Right lobe of liver (tissue), 6 donors: ENCODE measurements at regions of chr16 and their contacts with region 1.

Region 1: GRCh38 chr16:70470927-70471341 is 16.5 kb downstream of the FCSK start:
- DNase-seq: peak; percentile 66 to 80 (median 68)
- ATAC-seq: peak; percentile 79 to 91 (median 86)
- H3K4me3 ChIP-seq: no peak overlapping the region
- H3K27ac ChIP-seq: no peak overlapping the region
- H3K4me1 ChIP-seq: no peaks in the 10 kb centered on the region
- H3K27me3 ChIP-seq: no peaks in the 10 kb centered on the region
- CTCF ChIP-seq: peak; percentile 50 to 63 (median 54)
- POLR2A ChIP-seq: no peak

Region 2: DNA sequence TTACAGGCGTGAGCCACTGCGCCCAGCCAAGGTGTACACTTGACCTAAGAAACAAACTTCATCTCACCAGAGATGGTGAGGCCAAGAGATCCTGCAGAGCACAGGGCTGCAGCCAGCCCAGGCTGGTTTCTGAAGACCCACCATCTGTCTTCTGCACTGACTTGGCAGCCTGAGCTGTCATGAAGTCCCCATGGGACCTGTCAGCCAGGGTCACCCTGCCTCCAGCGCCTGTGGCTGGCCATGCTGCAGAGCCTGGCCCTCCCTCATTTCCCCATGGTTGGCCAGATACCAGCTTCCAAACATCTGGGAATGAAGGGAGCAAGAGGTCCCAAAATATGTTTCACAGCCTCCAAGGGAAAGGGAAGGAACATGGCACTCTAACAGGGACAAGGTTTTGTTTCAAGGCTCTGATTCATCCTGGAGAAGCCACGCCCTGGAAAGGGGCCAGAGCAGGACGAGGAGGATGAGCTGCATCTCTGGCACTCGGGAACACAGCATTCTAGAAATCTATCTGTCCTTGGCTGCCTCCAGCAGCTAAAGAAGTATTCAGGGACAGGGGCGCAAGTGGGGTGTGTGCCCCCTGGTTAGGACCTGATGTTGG is 79.0 kb before region 1 on chr16:
- intact Hi-C with region 1: loop called (anchors 5 kb)
- DNase-seq: no peak
- ATAC-seq: no peak
- H3K4me3 ChIP-seq: no peak overlapping the region
- H3K27ac ChIP-seq: no peak overlapping the region
- H3K4me1 ChIP-seq: no peaks in the 10 kb centered on the region
- H3K27me3 ChIP-seq: no peaks in the 10 kb centered on the region
- CTCF ChIP-seq: no peak
- POLR2A ChIP-seq: no peak